Endothelial cell of umbilical vein (primary cell): ENCODE measurements at regions of chr9 and their contacts with region 1.

Region 1: GRCh38 chr9:33473643-33474352 is at the start of gene NOL6:
- DNase-seq: peak; percentile 100
- H3K4me3 ChIP-seq: peak within 1 kb of the TSS; percentile 62 to 96 (median 89)
- H3K27ac ChIP-seq: peak within 1 kb of the TSS; percentile 70
- H3K4me1 ChIP-seq: peaks cover 15% of the 10 kb centered on the region
- H3K27me3 ChIP-seq: no peaks in the 10 kb centered on the region
- CTCF ChIP-seq: no peak
- POLR2A ChIP-seq: peak; percentile 94
- total RNA-seq, gene NOL6: 42.3 and 45.1 TPM in 2 replicates

Region 2: GRCh38 chr9:33264473-33265177 is 209.2 kb before region 1 on chr9 and contains the starts of genes BAG1 and CHMP5:
- CTCF ChIA-PET with region 1: no interaction called
- POLR2A ChIA-PET with region 1: no interaction called
- dilution Hi-C with region 1: no loop called
- intact Hi-C with region 1: loop called (anchors 5 kb)
- DNase-seq: peak; percentile 100
- H3K4me3 ChIP-seq: peak within 1 kb of the TSS; percentile 37 to 96 (median 75)
- H3K27ac ChIP-seq: peak within 1 kb of the TSS; percentile 34
- H3K4me1 ChIP-seq: peaks cover 15% of the 10 kb centered on the region
- H3K27me3 ChIP-seq: no peaks in the 10 kb centered on the region
- CTCF ChIP-seq: peak; percentile 9 to 37
- POLR2A ChIP-seq: peak; percentile 85
- total RNA-seq, gene BAG1: 87.4 and 98.7 TPM in 2 replicates
- total RNA-seq, gene CHMP5: 54.5 and 55.8 TPM in 2 replicates

Region 3: DNA sequence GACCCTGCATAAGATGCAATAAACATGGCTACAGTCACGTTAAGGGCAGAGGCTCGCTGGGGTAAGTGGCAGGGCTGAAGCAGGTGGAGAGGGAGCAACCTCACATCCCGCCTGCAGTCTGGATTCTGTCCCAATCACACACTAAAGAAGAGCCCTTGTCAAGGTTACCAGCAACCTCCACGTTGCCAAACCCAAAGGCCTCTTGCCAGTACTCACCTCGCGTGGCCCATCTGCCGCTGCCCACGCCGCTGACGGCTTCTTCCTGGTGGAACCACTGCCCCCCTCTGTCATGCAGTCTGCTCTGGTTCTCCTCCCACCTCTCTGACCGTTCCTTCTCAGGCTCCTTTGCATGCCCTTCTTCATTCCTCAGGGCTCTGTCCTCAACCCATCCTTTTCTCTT is 80.2 kb before region 1 on chr9:
- CTCF ChIA-PET with region 1: no interaction called
- POLR2A ChIA-PET with region 1: no interaction called
- dilution Hi-C with region 1: no loop called
- intact Hi-C with region 1: no loop called
- DNase-seq: no peak
- H3K4me3 ChIP-seq: no peak overlapping the region
- H3K27ac ChIP-seq: no peak overlapping the region
- H3K4me1 ChIP-seq: peaks cover 5% of the 10 kb centered on the region
- H3K27me3 ChIP-seq: no peaks in the 10 kb centered on the region
- CTCF ChIP-seq: no peak
- POLR2A ChIP-seq: no peak

Region 4: DNA sequence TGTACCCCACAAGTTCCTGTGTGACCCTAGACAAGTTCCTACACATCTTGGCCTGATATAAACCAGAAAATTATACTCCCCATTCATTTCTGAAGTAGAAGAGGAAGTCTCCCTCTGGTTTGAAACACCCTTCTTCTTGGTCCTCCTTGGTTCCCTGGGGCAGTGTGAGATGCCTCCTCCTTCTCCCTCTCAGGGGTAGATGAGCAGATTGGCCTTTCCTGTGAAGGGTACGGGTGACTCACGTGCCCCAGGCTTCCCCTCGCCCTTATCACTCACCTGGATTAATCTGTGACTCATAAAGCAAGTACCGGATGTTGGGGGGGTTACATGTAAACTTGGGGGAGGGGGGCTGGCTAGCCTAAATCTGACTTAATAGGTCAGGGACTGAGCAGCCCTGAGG is 15.4 kb before region 1 on chr9:
- CTCF ChIA-PET with region 1: interaction called, 49 read pairs
- POLR2A ChIA-PET with region 1: interaction called, 5 read pairs
- dilution Hi-C with region 1: no loop called
- intact Hi-C with region 1: loop called (anchors 2 kb)
- DNase-seq: peak; percentile 38
- H3K4me3 ChIP-seq: no peak overlapping the region
- H3K27ac ChIP-seq: no peak overlapping the region
- H3K4me1 ChIP-seq: peaks cover 14% of the 10 kb centered on the region
- H3K27me3 ChIP-seq: no peaks in the 10 kb centered on the region
- CTCF ChIP-seq: no peak
- POLR2A ChIP-seq: no peak

Region 5: DNA sequence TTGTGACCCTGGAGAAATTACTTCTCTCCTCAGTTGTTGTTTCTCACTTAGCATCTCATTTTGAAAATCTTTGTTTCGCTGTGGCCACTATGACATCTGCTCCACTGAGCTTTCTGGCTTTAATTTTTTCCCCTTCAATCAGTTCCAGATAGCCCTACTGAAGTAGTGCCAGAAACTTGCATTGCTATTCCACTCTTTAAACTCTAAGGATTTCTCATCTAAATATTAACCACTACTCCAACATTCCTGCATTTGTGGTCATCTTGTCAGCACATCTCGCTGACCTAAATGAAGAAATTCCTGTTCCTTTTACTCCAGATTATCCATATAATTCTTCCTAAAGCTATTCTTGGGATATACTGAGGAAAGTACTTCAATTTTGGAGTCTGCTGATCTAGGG is 15.3 kb after region 1 on chr9:
- CTCF ChIA-PET with region 1: no interaction called
- POLR2A ChIA-PET with region 1: no interaction called
- dilution Hi-C with region 1: no loop called
- intact Hi-C with region 1: no loop called
- DNase-seq: no peak
- H3K4me3 ChIP-seq: no peak overlapping the region
- H3K27ac ChIP-seq: no peak overlapping the region
- H3K4me1 ChIP-seq: no peaks in the 10 kb centered on the region
- H3K27me3 ChIP-seq: no peaks in the 10 kb centered on the region
- CTCF ChIP-seq: no peak
- POLR2A ChIP-seq: no peak

Region 6: DNA sequence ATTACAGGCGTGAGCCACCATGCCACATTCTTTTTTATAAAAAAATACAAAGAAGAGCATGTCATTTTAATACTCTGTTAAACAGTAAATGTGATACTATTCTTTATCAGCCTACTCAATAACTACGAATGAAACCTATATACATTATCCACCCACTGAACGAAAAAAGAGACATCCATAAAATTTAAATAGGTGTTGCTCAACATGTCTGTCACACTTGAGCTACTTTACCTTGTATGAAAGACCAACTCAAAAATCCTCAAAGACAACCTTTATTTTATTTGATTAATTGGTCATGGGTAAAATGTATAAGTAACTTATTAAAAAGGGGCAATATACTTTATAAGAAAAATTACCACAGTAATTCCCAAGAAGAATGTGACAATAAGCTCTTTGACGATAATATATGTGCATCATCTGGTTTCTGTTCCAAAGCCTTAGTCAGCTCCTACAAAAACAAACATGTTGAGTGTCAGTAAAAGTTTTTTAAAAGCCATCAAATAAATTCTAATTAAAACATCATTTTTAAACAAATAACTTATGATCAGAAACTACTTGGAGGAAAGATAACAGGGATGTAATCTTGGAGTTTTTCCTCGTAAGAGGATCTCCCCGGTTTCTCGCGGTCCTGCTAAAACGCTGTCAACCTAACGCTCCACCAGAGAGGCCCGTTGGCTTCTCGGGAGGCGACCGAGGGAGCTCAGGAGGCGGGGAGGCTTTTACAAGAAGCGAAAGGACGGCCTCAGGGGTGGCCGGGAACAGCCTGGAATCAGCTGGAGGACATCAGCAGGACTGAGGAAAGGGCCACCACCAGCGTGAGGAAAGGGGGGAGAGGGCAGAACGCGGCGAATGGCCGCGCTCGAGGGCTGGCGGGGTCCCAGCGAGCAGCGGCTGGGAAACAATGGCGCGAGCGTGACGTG is 36.7 kb after region 1 on chr9:
- CTCF ChIA-PET with region 1: no interaction called
- POLR2A ChIA-PET with region 1: interaction called, 8 read pairs
- dilution Hi-C with region 1: no loop called
- intact Hi-C with region 1: loop called (anchors 2 kb)
- DNase-seq: peak; percentile 78
- H3K4me3 ChIP-seq: peak overlapping the region; percentile 75 to 84 (median 79)
- H3K27ac ChIP-seq: peak overlapping the region; percentile 100
- H3K4me1 ChIP-seq: peaks cover 28% of the 10 kb centered on the region
- H3K27me3 ChIP-seq: no peaks in the 10 kb centered on the region
- CTCF ChIP-seq: no peak
- POLR2A ChIP-seq: peak; percentile 83

Region 7: DNA sequence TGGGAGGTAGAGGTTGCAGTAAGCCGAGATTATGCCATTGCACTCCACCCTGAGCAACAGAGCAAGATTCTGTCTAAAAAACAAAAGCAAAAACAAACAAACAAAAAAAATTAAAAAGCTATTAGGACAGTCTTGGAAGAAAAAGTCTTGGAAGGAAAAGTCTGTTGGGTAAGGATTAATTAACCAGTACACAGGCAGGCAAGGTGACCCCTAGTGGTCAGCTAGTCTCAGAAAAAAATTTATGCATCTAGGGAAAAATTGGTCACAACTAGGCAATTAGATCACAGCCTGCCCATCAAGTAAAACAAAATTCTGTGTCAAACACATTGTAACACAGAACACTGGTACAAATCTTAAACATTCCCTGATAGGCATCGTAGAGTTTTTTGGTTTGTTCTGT is 43.6 kb after region 1 on chr9:
- CTCF ChIA-PET with region 1: interaction called, 16 read pairs
- POLR2A ChIA-PET with region 1: interaction called, 4 read pairs
- dilution Hi-C with region 1: no loop called
- intact Hi-C with region 1: no loop called
- DNase-seq: peak; percentile 53
- H3K4me3 ChIP-seq: no peak overlapping the region
- H3K27ac ChIP-seq: no peak overlapping the region
- H3K4me1 ChIP-seq: peaks cover 3% of the 10 kb centered on the region
- H3K27me3 ChIP-seq: no peaks in the 10 kb centered on the region
- CTCF ChIP-seq: peak; percentile 50
- POLR2A ChIP-seq: no peak

Region 8: GRCh38 chr9:33638391-33638915 is 164.7 kb after region 1 on chr9:
- CTCF ChIA-PET with region 1: no interaction called
- POLR2A ChIA-PET with region 1: no interaction called
- dilution Hi-C with region 1: no loop called
- intact Hi-C with region 1: no loop called
- DNase-seq: no peak
- H3K4me3 ChIP-seq: no peak overlapping the region
- H3K27ac ChIP-seq: no peak overlapping the region
- H3K4me1 ChIP-seq: no peaks in the 10 kb centered on the region
- H3K27me3 ChIP-seq: peaks cover 34 to 93% of the 10 kb centered on the region in 2 experiments
- CTCF ChIP-seq: no peak
- POLR2A ChIP-seq: no peak

Region 9: DNA sequence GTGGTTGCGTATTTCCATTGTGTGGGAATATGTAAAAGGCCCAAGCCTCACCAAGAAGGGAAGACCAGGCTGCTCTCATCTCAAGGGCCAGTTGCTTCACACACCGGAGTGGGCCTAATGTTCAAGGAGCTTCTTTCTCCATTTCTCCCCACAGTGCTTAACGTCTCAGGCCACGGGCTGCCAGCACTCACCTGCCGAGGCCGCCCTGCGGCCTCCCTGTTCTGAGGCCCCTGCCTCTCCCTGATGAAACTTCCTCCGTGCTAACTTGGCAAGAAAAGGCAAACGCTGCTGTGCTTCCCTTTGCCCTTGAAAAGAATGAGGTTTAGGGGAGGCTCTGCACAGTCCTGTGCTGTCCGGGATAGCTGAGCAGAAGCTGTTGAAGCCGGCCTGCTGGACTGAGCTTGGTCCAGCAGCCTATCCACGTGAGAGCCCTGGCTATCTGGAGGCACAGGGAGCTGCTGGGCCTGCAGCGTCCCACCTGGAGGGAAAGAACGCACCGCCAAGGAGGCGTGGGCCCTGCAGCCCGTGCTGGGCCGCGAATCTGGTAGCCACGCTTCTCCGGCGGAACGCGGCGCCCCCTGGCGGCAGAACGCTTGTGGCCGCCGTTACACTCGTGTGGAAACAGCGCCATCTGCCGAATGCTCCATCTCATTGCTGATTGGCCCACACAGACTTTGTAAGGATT is 248.0 kb after region 1 on chr9:
- CTCF ChIA-PET with region 1: no interaction called
- POLR2A ChIA-PET with region 1: no interaction called
- dilution Hi-C with region 1: no loop called
- intact Hi-C with region 1: loop called (anchors 5 kb)
- DNase-seq: peak; percentile 84
- H3K4me3 ChIP-seq: no peak overlapping the region
- H3K27ac ChIP-seq: no peak overlapping the region
- H3K4me1 ChIP-seq: peaks cover 13% of the 10 kb centered on the region
- H3K27me3 ChIP-seq: peaks cover 0 to 4% of the 10 kb centered on the region in 2 experiments
- CTCF ChIP-seq: peak; percentile 100
- POLR2A ChIP-seq: no peak